ENCODE measurements at regions of chr7 and their contacts with region 1.

Region 1: GRCh38 chr7:142338633-142339501 is 81.0 kb upstream of the PRSS58 start:
- DNase-seq: no peak
- ATAC-seq: no peak

Region 2: GRCh38 chr7:142279601-142280000 is 59.3 kb before region 1 on chr7:
- intact Hi-C with region 1: no loop called
- DNase-seq: no peak
- ATAC-seq: no peak

Region 3: DNA sequence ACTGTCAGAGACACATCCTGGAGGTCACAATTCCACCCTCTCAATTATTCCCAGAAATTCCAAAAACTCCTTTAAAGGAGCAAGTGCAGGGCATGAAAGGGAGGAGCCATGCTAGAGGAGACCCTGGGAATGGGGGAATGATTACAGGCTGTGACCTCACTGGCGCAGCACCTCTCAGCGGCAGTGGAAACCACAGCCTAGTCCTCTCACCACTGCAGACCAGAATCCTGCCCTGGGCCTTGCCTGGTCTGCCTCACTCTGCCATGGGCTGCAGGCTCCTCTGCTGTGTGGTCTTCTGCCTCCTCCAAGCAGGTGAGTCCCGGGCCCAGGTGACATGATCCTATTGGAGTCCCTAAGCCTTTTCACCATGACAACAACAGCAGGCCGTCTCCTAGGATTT is 30.5 kb before region 1 on chr7:
- intact Hi-C with region 1: loop called in 1 of 2 experiments (anchors 2 kb)
- DNase-seq: no peak
- ATAC-seq: no peak